HEK293 (cell line): ENCODE measurements at regions of chr1 and their contacts with region 1.

Region 1: GRCh38 chr1:9626201-9626608 is 25.3 kb upstream of the PIK3CD start:
- H3K4me3 ChIP-seq: no peak overlapping the region
- H3K27ac ChIP-seq: no peak overlapping the region
- H3K4me1 ChIP-seq: no peaks in the 10 kb centered on the region
- CTCF ChIP-seq: no peak

Region 2: GRCh38 chr1:9615316-9616063 is 10.7 kb before region 1 on chr1:
- CTCF ChIA-PET with region 1: interaction called, 15 read pairs
- POLR2A ChIA-PET with region 1: no interaction called
- H3K4me3 ChIP-seq: no peak overlapping the region
- H3K27ac ChIP-seq: no peak overlapping the region
- H3K4me1 ChIP-seq: no peaks in the 10 kb centered on the region
- CTCF ChIP-seq: peak; percentile 70

Region 3: DNA sequence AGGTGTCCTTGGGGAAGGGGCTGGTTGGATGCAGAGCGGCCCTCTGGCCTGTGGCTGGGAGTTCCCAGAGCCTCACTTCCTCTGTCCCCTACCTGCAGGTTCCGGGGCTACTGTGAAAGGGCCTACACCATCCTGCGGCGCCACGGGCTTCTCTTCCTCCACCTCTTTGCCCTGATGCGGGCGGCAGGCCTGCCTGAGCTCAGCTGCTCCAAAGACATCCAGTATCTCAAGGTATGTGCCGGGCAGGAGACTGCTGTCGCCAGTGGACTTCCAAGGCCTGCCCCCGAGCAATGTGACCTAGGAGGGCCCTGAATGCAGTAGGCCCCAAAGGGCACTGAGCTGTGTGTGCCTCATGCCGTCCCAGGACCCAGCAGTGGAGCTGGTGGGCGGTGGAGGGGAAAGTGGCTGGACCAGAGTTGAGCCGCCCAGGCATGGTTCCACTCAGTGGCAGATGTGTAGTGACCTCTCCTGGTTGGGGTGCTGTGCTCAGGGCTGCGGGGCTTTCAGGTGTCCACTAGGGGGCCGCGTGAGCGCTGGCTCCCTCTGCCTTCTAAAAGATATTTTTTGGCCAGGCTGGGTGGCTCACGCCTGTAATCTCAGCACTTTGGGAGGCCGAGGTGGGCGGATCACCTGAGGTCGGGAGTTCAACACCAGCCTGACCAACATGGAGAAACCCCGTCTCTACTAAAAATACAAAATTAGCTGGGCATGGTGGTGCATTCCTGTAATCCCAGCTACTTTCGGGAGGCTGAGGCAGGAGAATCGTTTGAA is 98.7 kb after region 1 on chr1:
- CTCF ChIA-PET with region 1: interaction called, 13 read pairs
- POLR2A ChIA-PET with region 1: no interaction called
- H3K4me3 ChIP-seq: no peak overlapping the region
- H3K27ac ChIP-seq: no peak overlapping the region
- H3K4me1 ChIP-seq: no peaks in the 10 kb centered on the region
- CTCF ChIP-seq: peak; percentile 59

Region 4: DNA sequence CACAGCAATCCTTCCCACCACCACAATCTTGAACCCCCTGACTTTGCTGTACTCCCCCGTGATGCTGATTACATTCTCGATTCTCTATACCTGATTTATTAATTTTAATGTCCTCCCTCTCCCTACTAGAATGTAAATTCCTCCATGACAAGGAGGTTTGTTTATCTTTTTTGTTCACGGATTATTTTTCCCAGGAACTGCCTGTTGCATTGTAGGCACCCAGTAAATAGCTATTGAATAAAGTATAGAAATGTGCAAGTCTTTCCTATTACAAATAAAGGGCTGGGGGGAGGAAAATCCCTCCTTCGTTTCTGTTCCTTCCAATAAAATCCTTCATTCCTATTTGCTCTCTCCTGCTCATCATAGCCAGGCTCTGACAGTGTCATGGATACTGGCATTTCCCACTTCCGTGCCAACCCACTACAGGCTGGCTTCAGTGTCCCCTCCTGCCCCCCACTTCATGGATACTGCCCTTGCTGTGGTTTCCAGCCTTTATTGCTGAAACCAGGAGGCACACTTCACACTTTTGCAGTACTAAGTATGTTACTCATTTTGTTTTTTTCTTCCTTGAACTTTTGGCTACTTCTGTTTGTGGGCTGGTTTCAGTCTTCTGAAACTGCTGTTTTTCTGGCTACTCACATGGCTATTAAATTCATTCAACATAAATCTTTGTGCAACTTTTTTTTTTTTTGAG is 591.7 kb after region 1 on chr1:
- CTCF ChIA-PET with region 1: no interaction called
- POLR2A ChIA-PET with region 1: no interaction called
- H3K4me3 ChIP-seq: no peak overlapping the region
- H3K27ac ChIP-seq: 0 out of 2 replicates have a peak overlapping the region, but pooled peaks have one; percentile 17
- H3K4me1 ChIP-seq: peaks cover 17% of the 10 kb centered on the region
- CTCF ChIP-seq: no peak